ENCODE measurements at regions of chr10 and their contacts with region 1.

Region 1: GRCh38 chr10:103481974-103482531 is 3.0 kb upstream of the CALHM3 start:
- DNase-seq: peak in 2 of 4 donors; percentile 17 to 39
- ATAC-seq: peak; percentile 75
- H3K4me3 ChIP-seq: no peak overlapping the region
- H3K27ac ChIP-seq: no peak overlapping the region
- H3K4me1 ChIP-seq: peaks cover 0 to 12% of the 10 kb centered on the region in 2 donors
- H3K27me3 ChIP-seq: no peaks in the 10 kb centered on the region
- CTCF ChIP-seq: peak; percentile 63 to 66

Region 2: DNA sequence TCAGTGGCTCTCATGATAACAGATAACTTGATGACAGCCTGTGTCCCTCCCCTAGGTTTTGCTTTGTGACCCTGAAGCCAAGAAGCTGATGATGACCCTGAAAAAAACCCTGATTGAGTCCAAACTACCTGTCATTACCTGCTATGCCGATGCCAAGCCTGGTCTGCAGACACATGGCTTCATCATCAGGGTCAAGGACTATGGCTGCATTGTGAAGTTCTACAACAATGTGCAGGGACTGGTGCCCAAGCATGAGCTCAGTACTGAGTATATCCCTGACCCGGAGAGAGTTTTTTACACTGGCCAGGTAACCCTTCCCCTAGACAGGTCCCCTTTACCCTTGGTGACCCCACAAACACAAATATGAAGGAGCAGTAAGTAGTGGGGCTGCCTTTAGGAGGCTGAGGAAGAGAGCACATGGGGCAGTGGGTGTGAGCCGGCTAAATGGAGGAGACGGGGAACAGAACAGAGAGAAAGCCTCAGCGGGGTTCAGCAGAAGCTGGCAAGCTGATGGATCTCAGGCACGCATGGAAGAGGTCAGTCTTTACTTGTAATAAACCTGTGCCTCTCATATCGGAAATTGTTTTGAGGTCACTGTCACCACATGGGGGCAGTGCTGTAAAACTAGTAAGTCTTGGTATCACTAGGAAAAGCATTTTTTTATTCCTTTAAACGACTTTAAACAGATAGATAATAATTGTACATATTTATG is 65.5 kb before region 1 on chr10:
- intact Hi-C with region 1: loop called in 1 of 2 experiments (anchors 5 kb)
- DNase-seq: peak in 3 of 4 donors; percentile 40 to 72 (median 40)
- ATAC-seq: peak; percentile 79
- H3K4me3 ChIP-seq: no peak overlapping the region
- H3K27ac ChIP-seq: no peak overlapping the region
- H3K4me1 ChIP-seq: no peaks in the 10 kb centered on the region
- H3K27me3 ChIP-seq: no peaks in the 10 kb centered on the region
- CTCF ChIP-seq: peak; percentile 51

Region 3: DNA sequence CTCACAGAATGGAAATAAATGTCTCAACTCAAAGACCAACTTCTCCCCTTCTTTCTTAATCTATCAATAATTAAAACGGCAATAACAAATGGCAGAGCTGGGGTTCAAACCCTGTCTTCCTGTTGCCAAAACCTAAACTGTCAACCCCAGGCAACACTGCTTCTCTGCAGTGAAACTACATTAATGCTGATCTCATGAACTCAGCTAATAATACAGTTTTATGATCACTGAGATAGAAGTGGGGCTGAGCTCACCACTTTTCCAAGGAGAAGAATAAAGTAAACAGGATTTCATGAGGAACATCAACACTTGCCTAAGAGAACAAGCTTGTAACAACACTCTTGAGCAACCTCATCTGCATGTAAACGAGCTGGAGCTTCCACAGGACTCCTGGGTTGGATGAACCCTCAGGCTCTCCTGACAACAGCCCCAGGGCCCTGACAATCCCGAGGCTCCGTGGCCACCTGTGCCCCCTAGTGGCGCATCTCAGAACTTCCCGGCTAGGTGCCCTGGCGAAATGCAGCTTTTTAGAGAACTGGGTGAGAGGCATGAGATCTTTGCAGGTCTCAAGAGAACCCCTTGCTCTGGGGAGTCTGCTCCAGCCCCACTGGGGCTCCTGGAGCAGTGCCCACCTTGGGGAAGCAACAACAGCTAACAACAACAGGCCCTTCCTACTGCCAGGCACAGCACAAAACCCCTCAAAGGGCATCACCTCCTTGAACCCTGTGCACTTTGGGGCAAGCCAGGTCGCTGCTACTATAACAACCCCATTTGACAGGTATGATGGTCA is 204.0 kb after region 1 on chr10:
- intact Hi-C with region 1: no loop called
- DNase-seq: peak; percentile 66 to 88 (median 75)
- ATAC-seq: peak; percentile 93
- H3K4me3 ChIP-seq: no peak overlapping the region
- H3K27ac ChIP-seq: no peak overlapping the region
- H3K4me1 ChIP-seq: peaks cover 0 to 5% of the 10 kb centered on the region in 2 donors
- H3K27me3 ChIP-seq: peaks cover 0 to under 1% of the 10 kb centered on the region in 2 donors
- CTCF ChIP-seq: peak; percentile 91 to 98